SK-N-SH (cell line): ENCODE measurements at regions of chr6 and their contacts with region 1.

Region 1: GRCh38 chr6:99330159-99330558 is 19.3 kb downstream of the FAXC start:
- DNase-seq: peak; percentile 63
- H3K4me3 ChIP-seq: no peak overlapping the region
- H3K27ac ChIP-seq: peak overlapping the region in 1 of 2 experiments; percentile 47; a peak in 1 of 4 replicates
- H3K4me1 ChIP-seq: peaks cover 0 to 3% of the 10 kb centered on the region in 2 experiments; a peak in 2 of 4 replicates
- H3K27me3 ChIP-seq: no peaks in the 10 kb centered on the region
- CTCF ChIP-seq: peak; percentile 91
- EP300 ChIP-seq: no peak
- RAD21 ChIP-seq: peak; percentile 73

Region 2: GRCh38 chr6:99312354-99312753 is 17.8 kb before region 1 on chr6:
- CTCF ChIA-PET with region 1: interaction called, 17 read pairs
- POLR2A ChIA-PET with region 1: no interaction called
- DNase-seq: no peak
- H3K4me3 ChIP-seq: no peak overlapping the region
- H3K27ac ChIP-seq: no peak overlapping the region
- H3K4me1 ChIP-seq: no peaks in the 10 kb centered on the region; a peak in 1 of 4 replicates
- H3K27me3 ChIP-seq: no peaks in the 10 kb centered on the region
- CTCF ChIP-seq: no peak
- EP300 ChIP-seq: no peak
- RAD21 ChIP-seq: no peak

Region 3: GRCh38 chr6:99344289-99344688 is 14.1 kb after region 1 on chr6:
- CTCF ChIA-PET with region 1: interaction called, 28 read pairs
- POLR2A ChIA-PET with region 1: interaction called, 9 read pairs
- DNase-seq: no peak
- H3K4me3 ChIP-seq: no peak overlapping the region
- H3K27ac ChIP-seq: peak overlapping the region in 1 of 2 experiments; percentile 55; a peak in 2 of 4 replicates
- H3K4me1 ChIP-seq: peaks cover 3 to 4% of the 10 kb centered on the region in 2 experiments; a peak in 3 of 4 replicates
- H3K27me3 ChIP-seq: no peaks in the 10 kb centered on the region
- CTCF ChIP-seq: no peak
- EP300 ChIP-seq: no peak
- RAD21 ChIP-seq: no peak

Region 4: GRCh38 chr6:99393698-99394531 is 63.8 kb after region 1 on chr6 and contains the start of gene COQ3:
- CTCF ChIA-PET with region 1: interaction called, 14 read pairs
- POLR2A ChIA-PET with region 1: interaction called, 5 read pairs
- DNase-seq: peak; percentile 92
- H3K4me3 ChIP-seq: peak within 1 kb of the TSS; percentile 68 to 74
- H3K27ac ChIP-seq: peak within 1 kb of the TSS; percentile 76 to 95
- H3K4me1 ChIP-seq: no peaks in the 10 kb centered on the region; a peak in 2 of 4 replicates
- H3K27me3 ChIP-seq: no peaks in the 10 kb centered on the region
- CTCF ChIP-seq: no peak
- EP300 ChIP-seq: no peak
- RAD21 ChIP-seq: no peak
- polyA plus RNA-seq, gene COQ3: 6.4 and 8.0 TPM in 2 replicates

Region 5: GRCh38 chr6:99746261-99746895 is 416.2 kb after region 1 on chr6:
- CTCF ChIA-PET with region 1: interaction called, 12 read pairs
- POLR2A ChIA-PET with region 1: no interaction called
- DNase-seq: peak; percentile 39
- H3K4me3 ChIP-seq: no peak overlapping the region; a peak in 1 of 4 replicates
- H3K27ac ChIP-seq: no peak overlapping the region
- H3K4me1 ChIP-seq: no peaks in the 10 kb centered on the region
- H3K27me3 ChIP-seq: no peaks in the 10 kb centered on the region; the same call in 1 of the 2 replicates
- CTCF ChIP-seq: peak; percentile 85
- EP300 ChIP-seq: no peak
- RAD21 ChIP-seq: peak; percentile 76